ENCODE measurements at regions of chr20 and their contacts with region 1.

Region 1: DNA sequence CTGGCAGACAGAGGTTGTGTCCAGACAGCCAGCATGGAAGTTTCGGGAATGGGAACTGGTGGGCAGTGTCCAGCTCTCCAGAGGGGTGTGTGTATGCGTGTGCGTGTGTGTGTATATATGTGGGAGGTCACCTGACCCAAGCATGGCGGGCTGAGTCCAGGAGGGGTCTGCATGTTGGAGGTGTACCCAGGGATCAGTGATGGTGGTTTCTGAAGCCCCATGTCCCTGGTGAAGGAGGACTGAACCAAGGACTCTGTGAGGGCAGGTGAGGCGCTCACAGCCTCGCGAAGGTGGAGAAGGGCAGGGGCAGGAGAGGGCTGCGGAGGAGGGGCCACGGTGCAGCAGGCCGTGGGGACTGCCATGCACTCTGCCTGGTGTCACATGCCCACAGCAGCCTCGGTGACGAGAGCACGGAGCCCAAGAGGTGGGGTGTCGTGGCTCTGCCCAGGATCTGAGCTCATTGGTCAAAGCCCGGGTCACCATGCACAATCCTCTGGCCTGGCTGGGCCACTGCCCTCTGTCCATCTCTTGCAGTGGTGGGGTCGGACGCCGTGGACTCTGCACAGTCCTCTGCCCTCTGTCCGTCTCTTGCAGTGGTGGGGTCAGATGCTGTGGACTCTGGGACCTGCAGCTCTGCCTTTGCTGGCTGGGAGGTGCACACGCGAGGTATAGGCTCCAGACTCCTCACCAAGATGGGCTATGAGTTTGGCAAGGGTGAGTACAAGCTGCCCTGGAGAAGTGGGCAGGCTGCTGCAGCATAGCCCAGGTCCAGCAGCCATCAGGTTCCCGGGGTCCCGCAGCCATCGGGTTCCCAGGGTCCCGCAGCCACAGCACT is 2.1 kb upstream of the LIME1 start:
- DNase-seq: no peak
- H3K4me3 Mint-ChIP-seq: no peak overlapping the region
- H3K27ac Mint-ChIP-seq: no peak overlapping the region
- H3K4me1 Mint-ChIP-seq: peaks cover 25% of the 10 kb centered on the region
- H3K27me3 Mint-ChIP-seq: no peaks in the 10 kb centered on the region

Region 2: DNA sequence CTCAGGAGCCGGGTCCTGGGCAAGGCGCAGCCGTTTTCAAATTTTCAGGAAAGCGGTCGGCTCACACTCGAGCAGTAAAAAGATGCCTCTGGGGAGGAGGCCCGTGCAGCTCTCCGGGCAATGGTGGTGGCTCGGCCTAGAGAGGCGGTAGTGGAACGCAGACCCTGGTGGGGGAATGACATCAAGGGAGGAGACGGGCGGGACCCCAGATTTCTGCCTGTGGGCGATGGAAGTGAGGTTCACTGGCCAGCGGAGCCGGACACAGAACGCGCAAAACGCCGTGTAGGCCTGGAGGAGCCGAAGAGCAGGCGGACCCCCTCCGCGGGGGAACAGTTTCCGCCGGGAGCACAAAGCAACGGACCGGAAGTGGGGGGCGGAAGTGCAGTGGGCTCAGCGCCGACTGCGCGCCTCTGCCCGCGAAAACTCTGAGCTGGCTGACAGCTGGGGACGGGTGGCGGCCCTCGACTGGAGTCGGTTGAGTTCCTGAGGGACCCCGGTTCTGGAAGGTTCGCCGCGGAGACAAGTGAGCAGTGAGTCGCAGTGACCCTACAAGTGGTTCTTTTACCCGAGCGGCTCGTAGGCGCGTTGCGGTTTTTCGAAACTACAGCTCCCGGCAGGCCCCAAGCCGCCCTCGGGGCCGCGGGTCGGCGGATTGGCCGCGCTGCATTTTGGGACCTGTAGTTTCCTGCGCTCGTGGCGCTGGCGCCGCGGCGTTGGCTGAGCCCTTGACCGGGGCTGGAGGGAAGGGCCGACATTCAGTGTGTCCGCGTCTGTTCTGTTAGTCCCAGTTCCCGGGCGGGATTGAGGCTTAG is 76.2 kb before region 1 on chr20 and contains the start of gene RTEL1:
- intact Hi-C with region 1: loop called (anchors 2 kb)
- DNase-seq: peak; percentile 87
- H3K4me3 Mint-ChIP-seq: peak within 1 kb of the TSS; percentile 94
- H3K27ac Mint-ChIP-seq: peak within 1 kb of the TSS; percentile 95
- H3K4me1 Mint-ChIP-seq: peaks cover 41% of the 10 kb centered on the region
- H3K27me3 Mint-ChIP-seq: peaks cover 7% of the 10 kb centered on the region
- total RNA-seq, gene RTEL1: 54.4 and 55.5 TPM in 2 replicates

Measured in activated T-helper 1 cell treated with anti-CD3 and anti-CD28 coated beads, Interleukin-12 subunit alpha, Interleukin-12 subunit beta, Interleukin-2, Interleukin-4 antibody, amounts not matched to agents 30 ng/mL and 10 ng/mL and 1 ng/mL, durations not matched to agents 14 hours and 24 hours and 36 hours (primary cell).